HepG2 (cell line): ENCODE measurements at regions of chr15 and their contacts with region 1.

Region 1: DNA sequence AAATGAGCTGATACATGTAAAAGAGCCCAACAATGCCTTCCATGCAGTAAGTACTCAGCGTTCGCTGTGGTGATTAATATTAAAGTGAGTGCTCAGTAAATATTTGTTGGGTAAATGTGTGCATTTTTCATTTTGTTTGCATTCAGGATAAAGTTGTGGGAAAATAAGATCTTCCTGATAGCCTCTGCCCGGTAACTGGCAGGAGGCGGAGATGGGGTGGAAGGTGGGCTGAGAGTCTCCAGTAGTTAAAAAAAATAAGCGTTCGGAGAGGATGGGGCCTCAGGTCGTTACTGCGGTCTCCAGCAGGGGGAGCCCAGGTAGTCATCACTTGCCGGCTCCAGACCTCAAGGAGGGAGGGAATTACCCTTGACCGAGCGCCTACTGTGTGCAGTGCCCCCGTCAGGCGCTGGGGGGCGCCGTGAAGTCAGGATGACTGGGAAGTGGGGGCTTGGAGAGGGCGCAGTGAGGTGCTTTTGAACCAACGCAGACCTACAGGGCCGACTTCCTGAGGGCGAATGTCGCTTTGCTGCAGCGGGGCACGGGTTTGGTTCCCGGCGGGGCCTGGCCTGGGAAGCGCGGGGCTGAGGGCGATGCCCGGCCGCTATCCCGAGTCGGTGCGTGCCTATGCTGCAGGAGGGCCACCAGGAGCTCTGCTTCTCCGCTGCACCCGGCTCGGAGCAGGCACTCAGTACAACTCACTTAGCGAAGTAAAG is 80.1 kb downstream of the RHCG start:
- DNase-seq: peak; percentile 66
- ATAC-seq: peak; percentile 82
- H3K4me3 ChIP-seq: no peak overlapping the region
- H3K27ac ChIP-seq: no peak overlapping the region
- H3K4me1 ChIP-seq: no peaks in the 10 kb centered on the region
- H3K27me3 ChIP-seq: peaks cover 2 to 30% of the 10 kb centered on the region in 2 experiments; a peak in 4 of 5 replicates
- CTCF ChIP-seq: peak; percentile 86
- EP300 ChIP-seq: no peak
- POLR2A ChIP-seq: no peak
- RAD21 ChIP-seq: peak; percentile 61

Region 2: GRCh38 chr15:88930579-88930978 is 485.7 kb before region 1 on chr15:
- CTCF ChIA-PET with region 1: no interaction called
- POLR2A ChIA-PET with region 1: no interaction called
- in situ Hi-C with region 1: no loop called
- intact Hi-C with region 1: no loop called
- DNase-seq: no peak
- ATAC-seq: no peak
- H3K4me3 ChIP-seq: no peak overlapping the region
- H3K27ac ChIP-seq: no peak overlapping the region
- H3K4me1 ChIP-seq: peaks cover 26% of the 10 kb centered on the region
- H3K27me3 ChIP-seq: no peaks in the 10 kb centered on the region
- CTCF ChIP-seq: no peak
- EP300 ChIP-seq: no peak
- POLR2A ChIP-seq: no peak
- RAD21 ChIP-seq: no peak

Region 3: GRCh38 chr15:89358755-89359439 is 57.4 kb before region 1 on chr15:
- CTCF ChIA-PET with region 1: no interaction called
- POLR2A ChIA-PET with region 1: no interaction called
- in situ Hi-C with region 1: no loop called
- intact Hi-C with region 1: loop called (anchors 5 kb)
- DNase-seq: peak; percentile 41
- ATAC-seq: peak; percentile 87
- H3K4me3 ChIP-seq: peak overlapping the region; percentile 38 to 72 (median 46); a peak in 4 of 6 replicates
- H3K27ac ChIP-seq: no peak overlapping the region
- H3K4me1 ChIP-seq: peaks cover 7% of the 10 kb centered on the region
- H3K27me3 ChIP-seq: peaks cover 6 to 74% of the 10 kb centered on the region in 2 experiments
- CTCF ChIP-seq: peak; percentile 97
- EP300 ChIP-seq: no peak
- POLR2A ChIP-seq: no peak
- RAD21 ChIP-seq: peak; percentile 91

Region 4: DNA sequence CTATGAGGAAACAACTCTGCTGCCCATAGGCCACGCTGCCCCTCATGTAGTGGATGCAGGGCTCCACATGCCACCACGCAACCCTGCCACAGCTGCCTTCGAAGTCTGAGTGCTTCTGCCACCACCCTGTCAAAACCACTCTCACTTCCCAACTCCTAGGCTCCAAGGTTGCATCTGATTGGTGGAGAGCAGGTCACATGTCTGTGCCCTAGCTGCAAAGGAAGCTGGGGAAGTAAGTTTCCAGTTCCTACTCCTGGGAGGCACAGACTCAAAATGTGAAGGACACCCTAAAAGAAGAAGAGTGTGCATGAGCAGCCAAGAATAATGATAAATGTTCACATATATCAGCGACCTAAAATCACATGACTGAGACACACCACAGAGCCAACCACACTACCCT is 127.1 kb after region 1 on chr15:
- CTCF ChIA-PET with region 1: no interaction called
- POLR2A ChIA-PET with region 1: no interaction called
- in situ Hi-C with region 1: no loop called
- intact Hi-C with region 1: no loop called
- DNase-seq: no peak
- ATAC-seq: no peak
- H3K4me3 ChIP-seq: no peak overlapping the region
- H3K27ac ChIP-seq: no peak overlapping the region
- H3K4me1 ChIP-seq: no peaks in the 10 kb centered on the region
- H3K27me3 ChIP-seq: no peaks in the 10 kb centered on the region
- CTCF ChIP-seq: no peak
- EP300 ChIP-seq: no peak
- POLR2A ChIP-seq: no peak
- RAD21 ChIP-seq: no peak